ENCODE measurements at regions of chr20 and their contacts with region 1.

Region 1: GRCh38 chr20:47205577-47206498 is 150.7 kb downstream of the ZMYND8 start:
- DNase-seq: no peak
- H3K4me3 ChIP-seq: no peak overlapping the region
- H3K27me3 ChIP-seq: no peaks in the 10 kb centered on the region
- CTCF ChIP-seq: peak; percentile 92

Region 2: DNA sequence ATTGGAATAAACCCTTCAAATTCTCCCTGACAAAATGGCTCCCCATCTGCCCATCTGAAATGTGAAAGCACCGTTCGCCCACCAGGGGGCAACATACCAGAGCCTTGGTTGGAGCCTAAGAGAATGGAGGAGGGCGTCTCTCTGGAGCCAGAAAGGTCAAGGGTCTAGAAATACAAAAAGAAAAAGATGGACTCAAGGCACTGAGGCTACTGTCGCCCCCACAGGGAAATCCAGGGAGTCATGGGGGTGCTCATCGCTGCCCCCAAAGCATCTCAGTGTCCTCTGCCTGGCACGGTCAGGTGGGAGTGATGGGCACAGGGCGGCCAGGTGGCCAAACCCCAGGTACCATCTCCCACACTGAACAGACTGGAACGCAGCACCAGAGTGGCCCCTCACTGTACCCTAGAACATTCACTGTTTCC is 14.3 kb after region 1 on chr20:
- CTCF ChIA-PET with region 1: interaction called, 42 read pairs
- POLR2A ChIA-PET with region 1: no interaction called
- DNase-seq: no peak
- H3K4me3 ChIP-seq: no peak overlapping the region
- H3K27me3 ChIP-seq: no peaks in the 10 kb centered on the region
- CTCF ChIP-seq: peak; percentile 59

Region 3: DNA sequence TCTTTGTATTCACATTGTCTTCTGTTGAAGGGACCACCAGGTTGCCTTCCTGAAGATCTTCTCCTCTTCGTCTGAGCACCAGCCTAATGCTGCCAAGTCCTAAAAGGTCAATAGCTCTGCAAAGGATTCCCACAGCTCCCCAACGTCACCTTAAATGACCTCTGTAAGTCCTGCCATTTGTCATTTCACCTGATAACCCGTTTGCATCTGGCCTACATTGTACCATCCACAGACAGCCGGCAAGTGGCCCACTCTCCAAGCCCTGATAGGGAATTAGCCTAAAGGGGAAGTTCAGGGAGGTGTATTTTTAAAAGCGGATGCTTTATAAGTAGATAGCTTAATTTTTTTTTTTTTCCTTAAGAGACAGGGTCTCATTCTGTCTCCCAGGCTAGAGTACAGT is 22.8 kb after region 1 on chr20:
- CTCF ChIA-PET with region 1: interaction called, 20 read pairs
- POLR2A ChIA-PET with region 1: no interaction called
- DNase-seq: no peak
- H3K4me3 ChIP-seq: no peak overlapping the region
- H3K27me3 ChIP-seq: no peaks in the 10 kb centered on the region
- CTCF ChIP-seq: no peak